CD8-positive, alpha-beta T cell (primary cell): ENCODE measurements at regions of chr3 and their contacts with region 1.

Region 1: GRCh38 chr3:4978204-4978965 is 852 bp upstream of the BHLHE40 start:
- DNase-seq: peak; percentile 52 to 92 (median 70)
- ATAC-seq: peak; percentile 43
- H3K4me3 ChIP-seq: peak overlapping the region; percentile 71 to 97
- H3K4me3 Mint-ChIP-seq: peak overlapping the region; percentile 97
- H3K27ac ChIP-seq: peak overlapping the region; percentile 70 to 95
- H3K27ac Mint-ChIP-seq: peak overlapping the region; percentile 96
- H3K4me1 ChIP-seq: peaks cover 46% of the 10 kb centered on the region
- H3K4me1 Mint-ChIP-seq: peaks cover 47% of the 10 kb centered on the region
- H3K27me3 ChIP-seq: no peaks in the 10 kb centered on the region
- H3K27me3 Mint-ChIP-seq: no peaks in the 10 kb centered on the region
- CTCF ChIP-seq: no peak

Region 2: GRCh38 chr3:4826237-4827100 is 151.9 kb before region 1 on chr3:
- CTCF ChIA-PET with region 1: interaction called, 24 read pairs
- POLR2A ChIA-PET with region 1: interaction called, 20 read pairs
- intact Hi-C with region 1: loop called (anchors 1 kb)
- DNase-seq: no peak
- ATAC-seq: no peak
- H3K4me3 ChIP-seq: peak overlapping the region in 1 of 2 experiments; percentile 0
- H3K4me3 Mint-ChIP-seq: peak overlapping the region; percentile 64
- H3K27ac ChIP-seq: no peak overlapping the region
- H3K27ac Mint-ChIP-seq: no peak overlapping the region
- H3K4me1 ChIP-seq: peaks cover 82% of the 10 kb centered on the region
- H3K4me1 Mint-ChIP-seq: peaks cover 94% of the 10 kb centered on the region
- H3K27me3 ChIP-seq: no peaks in the 10 kb centered on the region
- H3K27me3 Mint-ChIP-seq: no peaks in the 10 kb centered on the region
- CTCF ChIP-seq: no peak

Region 3: DNA sequence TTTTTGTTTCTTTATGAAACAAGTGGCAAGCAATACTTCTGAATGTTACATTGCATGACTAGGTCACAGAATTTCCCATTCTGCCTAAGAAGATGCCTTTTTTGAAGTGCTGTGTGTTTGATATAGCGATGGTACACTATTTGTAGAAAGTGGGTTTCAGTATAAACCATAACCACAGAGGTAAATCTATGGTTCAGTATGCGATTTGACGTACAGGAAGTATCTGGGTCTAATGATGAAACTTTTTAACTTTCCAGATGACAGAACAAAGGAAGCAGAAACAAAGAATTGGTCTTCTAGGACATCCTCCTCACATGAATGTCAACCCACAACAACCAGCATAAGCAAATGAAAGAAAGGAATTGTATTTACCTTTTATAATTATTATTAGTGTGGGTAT is 132.5 kb before region 1 on chr3:
- CTCF ChIA-PET with region 1: interaction called, 5 read pairs
- POLR2A ChIA-PET with region 1: interaction called, 4 read pairs
- intact Hi-C with region 1: loop called in 1 of 2 experiments (anchors 5 kb)
- DNase-seq: peak in 2 of 9 experiments; percentile 74 to 87
- ATAC-seq: peak; percentile 77
- H3K4me3 ChIP-seq: no peak overlapping the region
- H3K4me3 Mint-ChIP-seq: peak overlapping the region; percentile 38
- H3K27ac ChIP-seq: no peak overlapping the region
- H3K27ac Mint-ChIP-seq: peak overlapping the region; percentile 79
- H3K4me1 ChIP-seq: peaks cover 94% of the 10 kb centered on the region
- H3K4me1 Mint-ChIP-seq: peaks cover 87% of the 10 kb centered on the region
- H3K27me3 ChIP-seq: no peaks in the 10 kb centered on the region
- H3K27me3 Mint-ChIP-seq: no peaks in the 10 kb centered on the region
- CTCF ChIP-seq: no peak

Region 4: DNA sequence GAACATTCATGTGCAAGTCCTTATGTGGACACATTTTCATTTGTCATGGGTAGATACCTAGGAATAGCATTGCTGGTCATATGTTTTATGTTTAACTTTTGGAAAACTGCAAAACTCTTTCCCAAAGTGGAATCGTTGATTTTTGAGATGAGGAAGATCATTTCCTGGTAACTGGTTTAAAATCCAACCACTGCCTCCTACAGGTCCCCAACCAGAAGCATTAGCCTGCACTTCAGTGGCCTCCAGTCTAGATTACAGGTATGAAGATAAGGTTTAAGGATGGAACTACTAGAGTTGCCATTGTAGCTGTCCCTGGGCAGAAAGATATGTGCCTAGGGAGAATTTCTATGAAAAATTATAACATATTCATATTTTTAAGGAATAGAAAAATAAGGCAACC is 47.9 kb before region 1 on chr3:
- CTCF ChIA-PET with region 1: no interaction called
- POLR2A ChIA-PET with region 1: no interaction called
- intact Hi-C with region 1: loop called in 1 of 2 experiments (anchors 5 kb)
- DNase-seq: no peak
- ATAC-seq: no peak
- H3K4me3 ChIP-seq: no peak overlapping the region
- H3K4me3 Mint-ChIP-seq: no peak overlapping the region
- H3K27ac ChIP-seq: no peak overlapping the region
- H3K27ac Mint-ChIP-seq: no peak overlapping the region
- H3K4me1 ChIP-seq: peaks cover 9% of the 10 kb centered on the region
- H3K4me1 Mint-ChIP-seq: peaks cover 9% of the 10 kb centered on the region
- H3K27me3 ChIP-seq: no peaks in the 10 kb centered on the region
- H3K27me3 Mint-ChIP-seq: no peaks in the 10 kb centered on the region
- CTCF ChIP-seq: no peak

Region 5: DNA sequence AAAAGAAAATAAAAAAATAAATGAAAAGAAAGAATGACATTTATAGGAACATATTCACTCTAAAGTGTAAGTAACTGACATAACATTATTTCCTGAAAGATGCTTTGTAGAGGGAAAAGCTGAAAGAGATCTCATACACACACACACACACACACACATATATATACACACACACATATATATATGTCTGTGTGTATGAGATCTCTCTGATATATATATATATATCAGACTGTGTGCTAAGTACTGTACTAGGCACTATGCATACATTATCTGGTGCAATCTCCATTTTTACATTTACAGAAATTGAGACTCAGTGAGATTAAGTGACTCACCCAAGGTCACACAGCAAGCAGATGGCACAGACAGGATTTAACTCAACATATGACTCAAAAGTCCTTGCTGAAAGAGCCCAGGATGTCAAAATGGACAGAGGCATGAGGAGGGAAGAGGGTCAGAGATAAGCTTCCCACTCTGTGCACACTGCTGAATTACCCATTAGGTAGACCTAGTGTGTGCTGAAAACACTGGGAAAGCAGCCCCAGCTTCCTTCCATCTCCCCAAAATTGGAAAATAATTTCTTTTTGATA is 15.9 kb after region 1 on chr3:
- CTCF ChIA-PET with region 1: interaction called, 13 read pairs
- POLR2A ChIA-PET with region 1: interaction called, 6 read pairs
- intact Hi-C with region 1: no loop called
- DNase-seq: no peak
- ATAC-seq: no peak
- H3K4me3 ChIP-seq: no peak overlapping the region
- H3K4me3 Mint-ChIP-seq: no peak overlapping the region
- H3K27ac ChIP-seq: no peak overlapping the region
- H3K27ac Mint-ChIP-seq: no peak overlapping the region
- H3K4me1 ChIP-seq: no peaks in the 10 kb centered on the region
- H3K4me1 Mint-ChIP-seq: no peaks in the 10 kb centered on the region
- H3K27me3 ChIP-seq: no peaks in the 10 kb centered on the region
- H3K27me3 Mint-ChIP-seq: no peaks in the 10 kb centered on the region
- CTCF ChIP-seq: no peak

Region 6: DNA sequence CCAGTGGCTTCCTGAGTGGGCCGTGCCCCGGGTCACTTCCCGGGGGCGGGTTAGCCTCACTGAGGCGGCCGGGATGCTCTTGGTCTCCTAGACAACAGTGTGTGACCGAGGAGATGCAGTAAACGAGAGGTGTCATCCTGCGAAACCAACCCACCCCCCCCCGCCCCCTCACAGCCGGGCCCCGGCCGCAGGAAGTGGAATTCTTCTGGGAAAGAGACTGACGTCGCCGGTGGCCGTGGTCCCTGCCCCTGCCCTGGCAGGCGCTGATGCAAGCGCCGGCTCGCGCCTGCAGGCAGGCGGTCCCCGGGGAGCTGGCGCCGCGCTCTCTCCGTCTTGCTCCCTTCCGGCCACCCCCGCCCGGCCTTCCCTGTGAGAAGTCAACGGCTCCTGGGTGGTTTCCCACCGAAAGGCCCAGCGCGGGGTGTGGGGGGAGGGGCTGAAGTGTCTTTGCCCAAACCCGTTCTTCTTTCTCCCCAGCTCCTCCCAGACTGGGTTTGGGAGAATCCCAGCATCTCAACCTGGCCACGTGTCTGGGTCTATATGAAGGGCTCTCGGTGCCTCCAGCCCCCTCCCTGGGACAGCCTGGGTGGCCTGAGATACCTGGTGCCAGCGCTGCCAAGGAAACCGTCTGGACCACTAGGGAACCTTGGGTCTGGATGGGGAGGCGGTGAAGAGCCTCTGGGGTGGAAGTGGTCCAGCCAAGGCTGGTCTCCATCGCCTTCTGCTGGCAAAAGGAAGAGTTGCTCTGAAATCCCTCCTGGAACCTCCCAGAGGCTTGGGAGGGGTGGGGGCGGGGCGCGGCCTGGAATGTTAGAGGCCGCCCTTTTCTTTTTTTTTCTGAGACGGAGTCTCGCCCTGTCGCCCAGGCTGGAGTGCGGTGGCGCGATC is 48.2 kb after region 1 on chr3:
- CTCF ChIA-PET with region 1: interaction called, 19 read pairs
- POLR2A ChIA-PET with region 1: interaction called, 3 read pairs
- intact Hi-C with region 1: loop called in 1 of 2 experiments (anchors 10 kb)
- DNase-seq: peak in 8 of 9 experiments; percentile 41 to 90 (median 66)
- ATAC-seq: peak; percentile 74
- H3K4me3 ChIP-seq: peak overlapping the region; percentile 57 to 77
- H3K4me3 Mint-ChIP-seq: peak overlapping the region; percentile 80
- H3K27ac ChIP-seq: peak overlapping the region; percentile 33 to 39
- H3K27ac Mint-ChIP-seq: peak overlapping the region; percentile 77
- H3K4me1 ChIP-seq: peaks cover 4% of the 10 kb centered on the region
- H3K4me1 Mint-ChIP-seq: peaks cover 12% of the 10 kb centered on the region
- H3K27me3 ChIP-seq: no peaks in the 10 kb centered on the region
- H3K27me3 Mint-ChIP-seq: peaks cover 6% of the 10 kb centered on the region
- CTCF ChIP-seq: peak; percentile 52

Region 7: GRCh38 chr3:5187156-5187919 is 209.0 kb after region 1 on chr3 and contains the start of gene EDEM1:
- CTCF ChIA-PET with region 1: no interaction called
- POLR2A ChIA-PET with region 1: no interaction called
- intact Hi-C with region 1: loop called (anchors 5 kb)
- DNase-seq: peak; percentile 85 to 98 (median 93)
- ATAC-seq: peak; percentile 82
- H3K4me3 ChIP-seq: peak within 1 kb of the TSS; percentile 84 to 92
- H3K4me3 Mint-ChIP-seq: peak within 1 kb of the TSS; percentile 100
- H3K27ac ChIP-seq: peak within 1 kb of the TSS; percentile 89 to 95
- H3K27ac Mint-ChIP-seq: peak within 1 kb of the TSS; percentile 100
- H3K4me1 ChIP-seq: peaks cover 27% of the 10 kb centered on the region
- H3K4me1 Mint-ChIP-seq: peaks cover 42% of the 10 kb centered on the region
- H3K27me3 ChIP-seq: no peaks in the 10 kb centered on the region
- H3K27me3 Mint-ChIP-seq: no peaks in the 10 kb centered on the region
- CTCF ChIP-seq: no peak
- total RNA-seq, gene EDEM1: 73.0 to 88.9 TPM

Region 8: DNA sequence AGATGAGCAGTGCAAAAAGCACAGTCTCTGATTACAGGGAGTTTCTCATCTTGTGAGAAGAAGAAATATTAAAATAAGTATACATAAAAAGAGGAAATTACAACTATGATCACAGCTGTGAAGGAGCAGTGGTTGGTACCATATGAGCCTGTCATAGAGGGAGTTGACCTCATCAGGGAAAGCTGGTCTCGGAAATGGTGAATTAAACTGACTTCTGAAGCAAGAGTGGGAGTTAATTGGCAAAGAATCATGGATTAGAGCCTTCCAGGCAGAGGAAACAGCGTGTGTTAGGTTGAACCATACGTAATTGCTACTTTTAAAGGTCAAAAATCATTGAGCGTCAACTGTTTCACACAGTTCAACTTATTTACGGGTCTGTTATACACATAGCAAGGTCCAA is 748.2 kb after region 1 on chr3:
- CTCF ChIA-PET with region 1: no interaction called
- POLR2A ChIA-PET with region 1: no interaction called
- intact Hi-C with region 1: no loop called
- DNase-seq: no peak
- ATAC-seq: no peak
- H3K4me3 ChIP-seq: no peak overlapping the region
- H3K4me3 Mint-ChIP-seq: no peak overlapping the region
- H3K27ac ChIP-seq: no peak overlapping the region
- H3K27ac Mint-ChIP-seq: no peak overlapping the region
- H3K4me1 ChIP-seq: no peaks in the 10 kb centered on the region
- H3K4me1 Mint-ChIP-seq: no peaks in the 10 kb centered on the region
- H3K27me3 ChIP-seq: no peaks in the 10 kb centered on the region
- H3K27me3 Mint-ChIP-seq: no peaks in the 10 kb centered on the region
- CTCF ChIP-seq: no peak